T-cell (primary cell): ENCODE measurements at regions of chr3 and their contacts with region 1.

Region 1: DNA sequence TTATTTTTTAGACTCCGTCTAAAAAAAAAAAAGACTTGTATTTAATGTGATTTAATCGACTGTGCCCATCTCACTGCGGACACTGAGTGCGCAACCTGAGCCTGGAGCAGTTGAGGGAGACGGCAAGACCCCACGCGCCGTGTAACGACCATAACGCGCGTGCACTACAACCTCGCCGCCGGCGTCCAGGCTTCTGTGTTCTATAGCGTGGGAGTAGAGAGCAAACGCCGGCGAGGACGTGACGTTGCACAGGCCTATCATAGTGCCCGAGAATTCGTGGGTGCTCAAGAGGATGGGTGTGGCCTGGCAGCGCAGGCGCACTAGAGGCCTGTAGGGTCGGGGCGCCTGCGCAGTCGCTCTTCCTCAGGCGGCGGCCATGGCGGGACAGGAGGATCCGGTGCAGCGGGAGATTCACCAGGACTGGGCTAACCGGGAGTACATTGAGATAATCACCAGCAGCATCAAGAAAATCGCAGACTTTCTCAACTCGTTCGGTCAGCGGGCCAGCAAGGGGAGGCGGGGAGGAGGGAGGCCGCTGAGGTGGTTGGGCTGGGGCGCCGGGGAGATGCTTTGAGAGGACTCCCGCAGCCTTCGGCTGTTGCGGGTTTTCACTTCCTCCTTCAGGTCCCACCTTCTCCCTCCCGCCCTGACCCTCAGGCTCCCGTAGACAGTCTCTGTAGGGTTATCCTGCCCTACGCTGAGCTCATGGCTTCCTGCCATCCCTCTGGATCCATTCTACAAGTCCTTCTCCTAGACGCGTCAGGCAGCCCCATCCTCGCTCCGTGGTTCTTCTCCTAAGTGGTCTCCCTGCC is at the start of gene BRK1:
- DNase-seq: peak; percentile 82 to 97 (median 92)
- ATAC-seq: peak; percentile 98 to 99 (median 98)
- H3K4me3 ChIP-seq: peak within 1 kb of the TSS; percentile 74 to 90
- H3K4me3 Mint-ChIP-seq: peak within 1 kb of the TSS; percentile 99
- H3K27ac ChIP-seq: peak within 1 kb of the TSS; percentile 56
- H3K27ac Mint-ChIP-seq: peak within 1 kb of the TSS; percentile 97 to 99
- H3K4me1 ChIP-seq: peaks cover 13 to 32% of the 10 kb centered on the region in 2 experiments
- H3K4me1 Mint-ChIP-seq: peaks cover 38 to 45% (median 44%) of the 10 kb centered on the region in 3 donors
- H3K27me3 ChIP-seq: no peaks in the 10 kb centered on the region
- H3K27me3 Mint-ChIP-seq: no peaks in the 10 kb centered on the region
- total RNA-seq, gene BRK1: 53.9 to 74.9 (median 60.9) TPM

Region 2: GRCh38 chr3:10137151-10137550 is 21.6 kb after region 1 on chr3:
- CTCF ChIA-PET with region 1: no interaction called
- POLR2A ChIA-PET with region 1: interaction called in 1 of 2 experiments, 10 read pairs
- DNase-seq: no peak
- ATAC-seq: no peak
- H3K4me3 ChIP-seq: no peak overlapping the region
- H3K4me3 Mint-ChIP-seq: no peak overlapping the region
- H3K27ac ChIP-seq: no peak overlapping the region
- H3K27ac Mint-ChIP-seq: no peak overlapping the region
- H3K4me1 ChIP-seq: peaks cover 0 to 6% of the 10 kb centered on the region in 2 experiments
- H3K4me1 Mint-ChIP-seq: peaks cover 0 to 4% (median 1%) of the 10 kb centered on the region in 3 donors
- H3K27me3 ChIP-seq: no peaks in the 10 kb centered on the region
- H3K27me3 Mint-ChIP-seq: no peaks in the 10 kb centered on the region

Region 3: GRCh38 chr3:10235551-10235950 is 120.0 kb after region 1 on chr3:
- CTCF ChIA-PET with region 1: interaction called in 1 of 2 experiments, 10 read pairs
- POLR2A ChIA-PET with region 1: no interaction called
- DNase-seq: no peak
- ATAC-seq: no peak
- H3K4me3 ChIP-seq: no peak overlapping the region
- H3K4me3 Mint-ChIP-seq: no peak overlapping the region
- H3K27ac ChIP-seq: no peak overlapping the region
- H3K27ac Mint-ChIP-seq: no peak overlapping the region
- H3K4me1 ChIP-seq: peaks cover 12 to 24% of the 10 kb centered on the region in 2 experiments
- H3K4me1 Mint-ChIP-seq: peaks cover 30 to 35% (median 32%) of the 10 kb centered on the region in 3 donors
- H3K27me3 ChIP-seq: no peaks in the 10 kb centered on the region
- H3K27me3 Mint-ChIP-seq: no peaks in the 10 kb centered on the region